BJ (cell line): ENCODE measurements at regions of chr2 and their contacts with region 1.

Region 1: GRCh38 chr2:200483729-200484198 is 26.1 kb downstream of the KCTD18 start:
- DNase-seq: no peak
- H3K4me3 ChIP-seq: no peak overlapping the region
- H3K27me3 ChIP-seq: no peaks in the 10 kb centered on the region
- CTCF ChIP-seq: peak; percentile 49

Region 2: DNA sequence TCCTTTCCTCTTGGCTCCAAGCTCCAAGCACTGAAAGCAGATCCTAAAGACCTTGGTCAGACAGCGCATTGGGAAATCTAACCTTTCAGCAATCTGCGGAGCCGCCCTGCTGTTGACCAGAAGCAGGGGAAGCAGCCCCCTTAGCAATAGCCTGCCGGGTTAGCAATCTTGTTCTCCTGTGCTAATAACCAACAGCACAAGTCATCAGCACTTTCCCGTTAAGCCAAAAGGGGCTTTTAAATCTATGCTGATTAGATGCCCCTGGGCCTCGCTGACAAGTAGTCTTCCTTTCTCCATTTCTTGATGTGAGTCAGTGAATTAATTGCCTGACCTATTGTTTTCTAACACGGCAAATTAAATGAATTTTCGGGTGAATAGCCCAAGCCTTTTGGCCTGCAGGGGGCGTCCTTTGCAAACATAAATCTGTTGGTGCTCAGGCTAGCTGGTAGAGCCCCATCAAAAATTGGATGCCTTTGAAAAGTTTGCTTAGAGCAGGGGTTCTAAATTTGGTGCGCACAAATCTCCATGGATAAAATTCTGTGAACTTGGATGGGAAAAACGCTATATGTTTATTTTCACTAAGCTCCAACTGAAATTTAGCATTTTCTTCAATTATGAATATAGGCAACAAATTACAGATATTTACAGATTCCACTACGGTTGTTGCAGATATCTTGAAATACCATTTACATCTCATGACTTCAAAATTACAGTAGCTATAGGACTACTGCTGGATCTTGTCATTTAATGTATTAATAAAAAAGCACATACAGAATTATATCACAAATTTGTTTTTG is 503.7 kb before region 1 on chr2:
- CTCF ChIA-PET with region 1: interaction called, 62 read pairs
- POLR2A ChIA-PET with region 1: no interaction called
- DNase-seq: no peak
- H3K4me3 ChIP-seq: no peak overlapping the region
- H3K27me3 ChIP-seq: no peaks in the 10 kb centered on the region
- CTCF ChIP-seq: peak; percentile 75

Region 3: DNA sequence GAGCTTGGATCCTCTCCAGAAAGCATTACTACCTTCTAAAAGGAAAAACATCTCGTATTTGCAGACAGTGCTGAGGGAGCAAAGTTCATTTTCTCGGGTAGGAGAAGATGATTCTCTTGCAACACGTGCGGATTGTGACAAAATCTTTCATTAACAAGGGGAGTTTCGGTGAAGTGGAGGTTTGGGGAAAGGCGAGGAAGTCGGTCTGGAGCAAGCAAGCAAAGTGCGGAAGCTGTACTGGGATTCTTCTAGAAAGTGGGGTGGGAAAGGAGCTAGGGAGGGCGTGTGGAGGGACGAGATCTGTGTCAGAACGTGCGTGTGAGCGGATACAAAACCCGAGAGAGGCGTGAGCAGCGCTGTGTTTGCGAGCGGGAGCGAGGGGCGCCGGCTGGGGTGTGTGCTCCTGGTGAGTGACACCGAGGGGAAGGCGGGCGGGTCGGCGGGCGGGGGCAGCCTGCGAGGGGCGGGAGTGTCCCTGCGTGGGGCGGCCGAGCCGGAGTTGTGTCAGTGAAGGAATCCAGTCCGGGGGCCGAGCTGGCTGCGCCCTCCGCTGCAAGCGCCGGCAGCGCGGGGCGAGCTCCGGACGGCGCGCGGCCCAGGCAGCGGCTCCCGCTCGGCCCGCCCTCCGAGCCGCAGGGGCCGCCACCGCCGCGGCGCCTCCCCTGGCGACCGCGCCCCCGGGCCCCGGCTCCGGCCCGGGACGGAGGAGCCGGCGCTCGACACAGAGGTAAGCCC is 177.4 kb before region 1 on chr2 and contains the start of gene SPATS2L:
- CTCF ChIA-PET with region 1: interaction called, 15 read pairs
- POLR2A ChIA-PET with region 1: no interaction called
- DNase-seq: peak; percentile 49
- H3K4me3 ChIP-seq: peak within 1 kb of the TSS; percentile 75
- H3K27me3 ChIP-seq: no peaks in the 10 kb centered on the region
- CTCF ChIP-seq: no peak
- polyA plus RNA-seq, gene SPATS2L: 243 TPM in 2 replicates

Region 4: GRCh38 chr2:200496696-200497095 is 12.9 kb after region 1 on chr2:
- CTCF ChIA-PET with region 1: interaction called, 12 read pairs
- POLR2A ChIA-PET with region 1: no interaction called
- DNase-seq: no peak
- H3K4me3 ChIP-seq: no peak overlapping the region
- H3K27me3 ChIP-seq: no peaks in the 10 kb centered on the region
- CTCF ChIP-seq: no peak

Region 5: GRCh38 chr2:200765139-200765951 is 281.6 kb after region 1 on chr2:
- CTCF ChIA-PET with region 1: no interaction called
- POLR2A ChIA-PET with region 1: no interaction called
- DNase-seq: peak; percentile 91
- H3K4me3 ChIP-seq: no peak overlapping the region
- H3K27me3 ChIP-seq: no peaks in the 10 kb centered on the region
- CTCF ChIP-seq: no peak